ENCODE measurements at regions of chr1 and their contacts with region 1.

Region 1: GRCh38 chr1:43934101-43934985 is 742 bp downstream of the ARTN start:
- DNase-seq: peak; percentile 89
- H3K4me3 ChIP-seq: peak overlapping the region; percentile 53
- H3K27ac ChIP-seq: peak overlapping the region; percentile 63
- H3K4me1 ChIP-seq: peaks cover 32% of the 10 kb centered on the region
- H3K27me3 ChIP-seq: no peaks in the 10 kb centered on the region
- CTCF ChIP-seq: peak; percentile 91

Region 2: GRCh38 chr1:43853161-43853921 is 81.0 kb before region 1 on chr1:
- CTCF ChIA-PET with region 1: interaction called, 21 read pairs
- POLR2A ChIA-PET with region 1: no interaction called
- intact Hi-C with region 1: no loop called
- DNase-seq: peak; percentile 90
- H3K4me3 ChIP-seq: no peak overlapping the region
- H3K27ac ChIP-seq: peak overlapping the region; percentile 79
- H3K4me1 ChIP-seq: peaks cover 69% of the 10 kb centered on the region
- H3K27me3 ChIP-seq: no peaks in the 10 kb centered on the region
- CTCF ChIP-seq: no peak

Region 3: DNA sequence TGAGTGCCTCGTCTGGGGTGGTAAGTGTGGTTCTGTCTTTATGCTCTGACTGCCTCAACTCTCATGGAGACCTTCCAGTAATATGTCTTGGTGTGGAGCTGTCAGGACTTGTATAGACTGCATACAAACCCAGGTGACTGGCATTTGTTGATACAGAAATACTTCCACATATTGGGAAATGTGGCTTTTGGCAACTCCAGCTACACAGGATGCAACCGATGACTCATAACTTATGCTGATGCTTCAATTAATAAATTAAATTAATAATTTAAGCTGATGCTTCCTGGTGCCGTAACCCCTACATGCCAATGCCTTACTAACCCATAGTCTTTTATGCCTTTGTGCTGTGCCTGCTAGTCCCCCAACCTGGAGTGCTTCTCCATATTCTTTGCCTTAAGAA is 73.0 kb before region 1 on chr1:
- CTCF ChIA-PET with region 1: interaction called, 21 read pairs
- POLR2A ChIA-PET with region 1: no interaction called
- intact Hi-C with region 1: loop called (anchors 2 kb)
- DNase-seq: peak; percentile 46
- H3K4me3 ChIP-seq: no peak overlapping the region
- H3K27ac ChIP-seq: peak overlapping the region; percentile 46
- H3K4me1 ChIP-seq: peaks cover 44% of the 10 kb centered on the region
- H3K27me3 ChIP-seq: no peaks in the 10 kb centered on the region
- CTCF ChIP-seq: no peak